ENCODE measurements at regions of chr12 and their contacts with region 1.

Region 1: DNA sequence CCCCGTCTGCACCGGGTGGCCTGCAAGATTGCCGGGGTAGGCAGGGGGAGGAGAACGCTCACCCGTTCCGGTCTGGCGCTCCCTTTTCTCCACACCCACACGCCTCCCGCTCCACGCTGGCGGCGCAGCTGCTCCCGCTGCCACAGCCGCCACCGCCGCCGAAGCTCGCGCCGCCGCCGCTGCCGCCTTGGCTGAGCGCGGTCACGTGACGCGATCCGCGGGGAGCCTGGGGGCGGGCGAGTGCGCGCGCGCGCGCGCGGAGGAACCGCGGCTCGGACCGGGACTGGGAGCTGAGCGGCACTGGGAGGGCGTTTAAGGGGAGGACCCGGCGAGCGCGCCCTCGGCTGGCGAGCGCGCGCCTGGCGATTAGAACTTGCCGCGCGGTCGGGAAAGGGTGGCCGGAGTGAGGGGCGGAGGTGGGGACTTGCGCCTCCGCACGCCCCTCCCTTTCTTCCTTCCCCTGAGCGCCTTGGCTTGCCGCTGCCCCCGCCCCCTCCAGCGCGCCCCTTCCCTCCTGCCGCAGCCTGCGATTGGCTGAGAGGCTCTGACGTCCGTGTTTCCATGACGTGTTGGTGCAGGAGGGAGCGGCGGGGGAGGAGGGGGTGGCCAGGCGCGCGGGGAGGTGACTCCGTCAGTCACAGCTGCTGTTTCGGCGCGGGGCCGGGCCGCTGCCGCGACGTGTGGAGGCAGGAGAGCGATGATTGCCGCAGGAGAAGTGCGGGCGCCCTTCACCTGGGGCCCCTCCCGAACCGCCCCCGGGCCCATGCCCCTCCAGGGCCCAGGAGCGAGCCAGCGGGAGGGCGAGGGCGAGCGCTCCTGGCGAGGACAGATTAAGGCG is 738 bp upstream of the ATP2B1 start:
- DNase-seq: peak; percentile 96 to 100 (median 99)
- ATAC-seq: peak; percentile 72 to 74
- H3K4me3 Mint-ChIP-seq: peak overlapping the region; percentile 86 to 95 (median 93)
- H3K27ac Mint-ChIP-seq: peak overlapping the region; percentile 85 to 99 (median 98)
- H3K4me1 Mint-ChIP-seq: peaks cover 13 to 41% (median 34%) of the 10 kb centered on the region in 4 donors
- H3K27me3 Mint-ChIP-seq: no peaks in the 10 kb centered on the region

Region 2: GRCh38 chr12:89524541-89525285 is 184.7 kb before region 1 on chr12 and contains the start of gene GALNT4:
- POLR2A ChIA-PET with region 1: interaction called, 14 read pairs
- DNase-seq: peak; percentile 52 to 82 (median 70)
- ATAC-seq: peak; percentile 70 to 76
- H3K4me3 Mint-ChIP-seq: peak within 1 kb of the TSS; percentile 83 to 99 (median 95)
- H3K27ac Mint-ChIP-seq: peak within 1 kb of the TSS; percentile 82 to 96 (median 94)
- H3K4me1 Mint-ChIP-seq: peaks cover 26 to 72% (median 59%) of the 10 kb centered on the region in 4 donors
- H3K27me3 Mint-ChIP-seq: no peaks in the 10 kb centered on the region
- polyA plus RNA-seq, gene GALNT4: 2.0 to 2.6 (median 2.4) TPM

Region 3: DNA sequence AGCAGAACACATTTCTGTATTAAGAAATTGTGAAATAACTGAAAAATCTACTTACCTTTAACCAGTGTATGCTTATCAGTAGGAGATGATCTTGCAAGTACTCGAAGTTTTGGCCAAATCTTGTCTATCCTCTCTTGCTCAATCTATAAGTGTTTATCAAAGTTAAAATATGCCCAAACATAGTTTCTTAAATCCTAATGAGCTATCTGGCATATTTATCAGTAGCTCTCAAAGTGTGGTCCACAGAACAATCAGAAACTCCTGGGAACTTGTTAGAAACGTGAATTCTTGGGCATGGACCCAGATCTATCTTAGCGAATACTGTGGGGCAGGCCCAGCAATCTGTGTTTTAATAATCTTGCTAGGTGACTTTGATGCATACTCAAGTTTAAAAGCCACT is 99.0 kb before region 1 on chr12:
- POLR2A ChIA-PET with region 1: no interaction called
- DNase-seq: no peak
- ATAC-seq: no peak
- H3K4me3 Mint-ChIP-seq: no peak overlapping the region
- H3K27ac Mint-ChIP-seq: peak overlapping the region in 1 of 10 donors; percentile 21
- H3K4me1 Mint-ChIP-seq: no peaks in the 10 kb centered on the region
- H3K27me3 Mint-ChIP-seq: no peaks in the 10 kb centered on the region

Region 4: GRCh38 chr12:89689306-89689705 is 20.1 kb before region 1 on chr12:
- POLR2A ChIA-PET with region 1: no interaction called
- DNase-seq: no peak
- ATAC-seq: no peak
- H3K4me3 Mint-ChIP-seq: no peak overlapping the region
- H3K27ac Mint-ChIP-seq: peak overlapping the region in 1 of 10 donors; percentile 40
- H3K4me1 Mint-ChIP-seq: peaks cover 23 to 92% (median 62%) of the 10 kb centered on the region in 4 donors
- H3K27me3 Mint-ChIP-seq: no peaks in the 10 kb centered on the region

Region 5: DNA sequence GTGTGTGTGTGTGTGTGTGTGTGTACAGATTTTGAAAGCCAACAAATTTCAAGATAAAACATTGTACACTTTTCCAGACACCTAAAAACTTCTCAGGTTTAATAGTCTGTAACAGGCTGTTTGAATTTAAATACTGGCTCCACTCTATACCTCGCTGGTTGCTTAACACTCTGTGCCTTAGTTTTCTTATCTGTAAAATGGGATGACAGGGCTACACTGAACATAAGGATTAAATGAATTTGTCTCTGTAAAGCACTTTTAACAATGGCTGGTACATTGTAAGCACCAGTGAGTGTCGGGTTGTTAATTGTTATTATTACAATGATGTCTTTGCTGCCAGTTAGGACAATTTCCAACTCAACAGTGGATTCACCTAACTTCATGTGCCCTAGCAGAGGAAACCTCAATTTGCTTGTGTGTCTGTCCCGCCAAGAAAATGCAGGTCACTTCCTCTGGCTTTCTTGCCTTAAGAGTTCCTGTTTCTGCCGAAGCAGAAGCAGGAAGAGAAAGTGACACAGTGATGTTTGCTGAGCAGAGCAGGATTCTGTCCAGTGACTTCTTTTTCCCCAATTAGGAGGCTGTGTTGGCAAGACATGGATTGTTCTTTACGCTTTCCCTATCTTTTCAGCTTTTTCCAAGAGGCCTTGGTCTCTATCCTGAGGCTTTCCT is 153.3 kb after region 1 on chr12:
- POLR2A ChIA-PET with region 1: interaction called, 55 read pairs
- DNase-seq: peak in 9 of 10 donors; percentile 12 to 73 (median 53)
- ATAC-seq: peak; percentile 24 to 35
- H3K4me3 Mint-ChIP-seq: peak overlapping the region; percentile 72 to 85 (median 80)
- H3K27ac Mint-ChIP-seq: peak overlapping the region; percentile 96 to 99 (median 98)
- H3K4me1 Mint-ChIP-seq: peaks cover 30 to 72% (median 50%) of the 10 kb centered on the region in 4 donors
- H3K27me3 Mint-ChIP-seq: no peaks in the 10 kb centered on the region

Region 6: DNA sequence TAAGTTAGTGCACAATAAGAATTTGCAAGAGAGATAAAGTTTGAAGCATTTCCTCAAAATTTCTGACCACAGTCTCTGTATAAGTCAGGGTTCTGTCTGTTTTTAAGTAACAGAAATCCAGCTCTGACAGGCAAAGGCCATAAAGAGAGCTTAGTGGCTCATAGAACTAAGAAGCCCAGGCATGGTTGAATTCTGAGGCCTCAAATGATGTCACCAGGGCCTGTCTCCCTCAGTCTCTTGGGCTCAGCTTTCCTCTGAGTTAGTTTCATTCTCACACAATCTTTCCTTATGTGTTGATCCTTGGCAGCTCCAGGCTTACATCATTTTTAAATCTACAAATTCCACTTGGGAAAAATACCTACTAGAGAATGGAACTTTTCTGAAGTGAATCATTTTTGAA is 172.7 kb after region 1 on chr12:
- POLR2A ChIA-PET with region 1: interaction called, 41 read pairs
- DNase-seq: peak in 1 of 10 donors; percentile 13
- ATAC-seq: peak; percentile 26 to 33
- H3K4me3 Mint-ChIP-seq: peak overlapping the region in 8 of 10 donors; percentile 13 to 81 (median 62)
- H3K27ac Mint-ChIP-seq: peak overlapping the region; percentile 92 to 98 (median 96)
- H3K4me1 Mint-ChIP-seq: peaks cover 15 to 66% (median 53%) of the 10 kb centered on the region in 4 donors
- H3K27me3 Mint-ChIP-seq: no peaks in the 10 kb centered on the region

Region 7: DNA sequence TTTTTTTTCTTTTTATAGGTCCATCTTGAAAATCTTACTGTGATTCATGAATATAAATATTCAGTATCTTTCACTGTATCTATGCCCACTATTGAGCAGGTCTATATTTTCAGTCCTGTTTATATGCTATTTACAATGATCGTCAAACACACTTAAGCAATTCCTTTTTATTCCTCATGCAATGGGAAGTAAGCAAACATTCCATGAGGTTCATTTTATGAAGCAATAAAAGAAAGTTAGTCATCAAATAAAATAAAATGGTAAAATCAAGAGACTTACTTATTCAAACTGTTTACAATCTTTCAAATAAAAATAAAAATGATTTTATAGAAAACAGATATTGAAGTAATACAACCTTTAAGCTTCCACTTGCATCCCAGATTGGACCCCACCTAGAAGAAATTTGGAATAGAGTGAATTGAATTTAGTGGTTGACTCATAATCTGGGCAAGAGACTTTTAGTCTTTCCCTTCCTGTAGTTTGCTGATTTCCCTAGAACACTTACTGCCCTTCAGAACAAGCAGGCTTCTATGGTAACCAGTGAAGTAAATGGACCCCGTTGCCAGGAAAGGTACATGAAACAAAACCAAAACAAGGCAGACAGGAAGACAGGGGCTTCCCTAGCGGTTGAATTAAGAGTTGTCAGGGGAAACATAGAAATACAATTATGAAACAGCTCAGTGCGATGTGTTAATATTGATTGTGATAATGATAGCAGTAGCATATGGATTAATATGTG is 240.2 kb after region 1 on chr12:
- POLR2A ChIA-PET with region 1: interaction called, 43 read pairs
- DNase-seq: peak in 9 of 10 donors; percentile 29 to 91 (median 78)
- ATAC-seq: peak; percentile 84 to 93
- H3K4me3 Mint-ChIP-seq: peak overlapping the region in 9 of 10 donors; percentile 13 to 80 (median 51)
- H3K27ac Mint-ChIP-seq: peak overlapping the region; percentile 77 to 96 (median 92)
- H3K4me1 Mint-ChIP-seq: peaks cover 12 to 55% (median 46%) of the 10 kb centered on the region in 4 donors
- H3K27me3 Mint-ChIP-seq: no peaks in the 10 kb centered on the region

Region 8: DNA sequence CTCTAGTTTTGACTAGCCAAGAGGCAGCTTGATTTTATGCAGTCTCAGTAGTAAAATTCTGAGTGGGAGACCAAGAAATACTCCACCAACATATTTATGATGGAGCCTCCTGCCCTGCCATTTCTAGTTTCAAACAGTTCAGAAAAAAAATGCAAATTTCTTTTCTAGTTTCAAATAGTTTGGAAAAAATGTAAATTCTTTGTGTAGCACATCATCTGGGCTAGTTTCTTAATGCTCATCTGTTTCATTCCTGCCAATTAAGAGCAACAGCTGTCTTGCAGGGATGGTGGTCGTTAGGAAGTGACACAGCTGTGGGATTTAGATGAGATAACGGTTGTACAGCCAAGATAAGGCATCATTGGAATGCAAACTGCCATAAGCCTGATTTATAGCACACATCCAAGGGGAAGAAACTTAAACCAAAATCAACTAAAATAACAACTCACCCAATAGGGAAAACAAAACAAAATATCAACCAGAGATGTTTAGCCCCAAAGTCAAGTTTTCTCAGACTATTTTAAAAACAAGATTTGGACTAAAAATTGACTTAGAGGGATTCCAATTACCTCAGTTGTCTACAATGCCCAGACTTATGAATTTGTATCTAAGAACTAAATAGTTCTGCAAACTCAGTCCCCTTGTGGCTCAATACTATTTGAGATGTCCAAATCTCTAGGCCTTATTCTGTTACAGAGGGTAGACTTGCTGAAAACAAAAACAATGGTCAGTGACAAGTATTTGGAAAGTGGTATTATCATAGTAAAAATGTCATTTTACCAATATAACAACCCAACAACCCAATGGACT is 290.5 kb after region 1 on chr12:
- POLR2A ChIA-PET with region 1: no interaction called
- DNase-seq: no peak
- ATAC-seq: no peak
- H3K4me3 Mint-ChIP-seq: no peak overlapping the region
- H3K27ac Mint-ChIP-seq: no peak overlapping the region
- H3K4me1 Mint-ChIP-seq: no peaks in the 10 kb centered on the region
- H3K27me3 Mint-ChIP-seq: no peaks in the 10 kb centered on the region